MCF 10A (cell line): ENCODE measurements at regions of chr1 and their contacts with region 1.

Region 1: DNA sequence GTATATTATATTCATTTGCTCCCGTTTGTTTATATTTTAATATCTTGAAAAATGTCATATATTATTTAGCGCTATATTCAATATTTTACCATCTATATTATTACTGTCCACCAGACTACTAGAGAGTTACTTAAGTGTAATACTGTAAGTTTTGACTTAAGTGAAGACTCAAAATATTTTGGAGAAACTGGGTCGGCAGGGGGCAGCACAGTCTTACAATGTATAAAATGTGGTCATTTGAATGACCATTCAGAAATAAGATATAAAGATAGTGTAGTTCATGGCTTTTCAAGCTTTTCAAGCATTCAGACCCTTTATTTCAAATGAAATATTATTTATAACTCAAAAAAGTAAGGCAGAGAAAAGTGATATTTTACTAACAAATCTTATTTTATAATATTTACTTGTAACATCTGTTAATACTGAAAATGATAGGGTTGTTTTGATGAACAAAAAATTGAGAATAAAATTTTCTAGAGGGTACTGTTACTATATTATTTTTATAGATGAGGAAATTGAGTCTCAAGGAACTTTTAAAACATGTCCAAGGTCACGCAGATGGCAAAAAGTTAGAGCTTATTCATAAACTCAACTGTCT is 89.0 kb upstream of the SERTAD4 start:
- DNase-seq: peak; percentile 89
- H3K4me3 Mint-ChIP-seq: no peak overlapping the region
- H3K27ac Mint-ChIP-seq: no peak overlapping the region
- H3K4me1 Mint-ChIP-seq: no peaks in the 10 kb centered on the region
- H3K27me3 Mint-ChIP-seq: peaks cover 32% of the 10 kb centered on the region
- CTCF ChIP-seq: peak; percentile 91

Region 2: DNA sequence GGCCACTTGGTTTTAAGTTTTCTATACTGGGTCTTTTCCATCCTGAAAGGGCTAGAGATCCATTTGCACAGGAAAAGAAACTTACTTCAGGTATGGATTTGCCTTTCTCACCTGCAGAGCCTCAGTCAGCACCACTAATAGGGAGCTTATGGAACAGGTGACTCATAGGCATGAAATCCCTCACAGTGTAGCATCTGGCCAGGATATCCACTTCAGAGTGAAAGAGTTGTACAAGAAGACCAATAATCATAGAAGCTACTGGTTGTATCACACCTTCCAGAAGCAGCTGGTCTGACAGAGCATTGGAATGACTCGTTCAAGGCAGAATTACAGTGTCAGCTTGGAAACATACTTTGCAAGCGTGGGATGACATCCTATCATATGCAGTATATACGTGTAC is 231.8 kb before region 1 on chr1:
- CTCF ChIA-PET with region 1: no interaction called
- POLR2A ChIA-PET with region 1: no interaction called
- intact Hi-C with region 1: no loop called
- DNase-seq: peak; percentile 21
- H3K4me3 Mint-ChIP-seq: no peak overlapping the region
- H3K27ac Mint-ChIP-seq: no peak overlapping the region
- H3K4me1 Mint-ChIP-seq: peaks cover 7% of the 10 kb centered on the region
- H3K27me3 Mint-ChIP-seq: no peaks in the 10 kb centered on the region
- CTCF ChIP-seq: no peak

Region 3: GRCh38 chr1:210123924-210124589 is 19.5 kb before region 1 on chr1:
- CTCF ChIA-PET with region 1: interaction called, 13 read pairs
- POLR2A ChIA-PET with region 1: no interaction called
- intact Hi-C with region 1: no loop called
- DNase-seq: peak; percentile 80
- H3K4me3 Mint-ChIP-seq: no peak overlapping the region
- H3K27ac Mint-ChIP-seq: no peak overlapping the region
- H3K4me1 Mint-ChIP-seq: peaks cover 17% of the 10 kb centered on the region
- H3K27me3 Mint-ChIP-seq: peaks cover 18% of the 10 kb centered on the region
- CTCF ChIP-seq: no peak

Region 4: DNA sequence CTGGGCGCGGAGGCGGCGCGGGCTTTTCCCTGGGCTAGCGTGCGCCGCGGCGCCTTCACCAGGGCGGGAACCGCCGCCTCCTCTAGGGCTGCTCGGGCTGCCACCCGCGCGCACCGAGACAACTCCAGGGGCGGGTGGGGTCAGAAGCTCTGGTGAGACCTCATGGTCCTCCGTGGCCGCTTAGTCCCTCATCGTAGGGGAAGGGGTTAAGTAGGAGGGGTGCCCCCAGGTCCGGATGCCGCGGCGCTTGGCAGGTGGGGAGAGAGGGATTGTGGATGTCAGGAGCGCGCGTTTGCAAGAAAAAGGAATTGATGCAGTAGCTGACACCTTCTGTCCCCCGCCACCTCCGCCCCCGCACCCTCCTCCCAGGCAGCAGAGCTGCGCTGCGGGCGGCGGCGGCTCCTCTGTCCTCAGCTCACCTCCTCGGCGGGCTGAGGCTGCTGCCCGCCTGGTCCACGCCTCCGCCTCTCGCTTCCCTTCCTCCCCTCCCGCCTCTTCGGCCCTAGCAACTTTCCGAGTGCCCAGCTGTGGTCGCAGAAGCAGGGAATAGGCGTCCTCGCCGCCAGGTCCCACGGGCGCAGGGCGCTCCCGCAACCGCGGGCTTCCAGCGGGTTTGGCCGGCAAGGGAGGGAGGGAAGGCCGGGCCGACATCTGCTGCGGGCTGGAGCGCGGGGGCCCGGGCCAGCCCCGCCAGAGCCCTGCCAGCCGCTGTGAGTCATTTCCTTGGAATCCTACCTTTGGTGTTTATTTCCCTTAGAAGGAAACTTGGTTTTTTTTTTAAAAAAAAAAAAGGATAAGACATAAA is 89.9 kb after region 1 on chr1:
- CTCF ChIA-PET with region 1: interaction called, 5 read pairs
- POLR2A ChIA-PET with region 1: no interaction called
- intact Hi-C with region 1: loop called (anchors 10 kb)
- DNase-seq: peak; percentile 89
- H3K4me3 Mint-ChIP-seq: peak overlapping the region; percentile 69
- H3K27ac Mint-ChIP-seq: no peak overlapping the region
- H3K4me1 Mint-ChIP-seq: peaks cover 17% of the 10 kb centered on the region
- H3K27me3 Mint-ChIP-seq: no peaks in the 10 kb centered on the region
- CTCF ChIP-seq: no peak

Region 5: GRCh38 chr1:210321552-210321951 is 178.0 kb after region 1 on chr1:
- CTCF ChIA-PET with region 1: interaction called, 14 read pairs
- POLR2A ChIA-PET with region 1: no interaction called
- intact Hi-C with region 1: no loop called
- DNase-seq: peak; percentile 95
- H3K4me3 Mint-ChIP-seq: peak overlapping the region; percentile 4
- H3K27ac Mint-ChIP-seq: peak overlapping the region; percentile 93
- H3K4me1 Mint-ChIP-seq: peaks cover 19% of the 10 kb centered on the region
- H3K27me3 Mint-ChIP-seq: no peaks in the 10 kb centered on the region
- CTCF ChIP-seq: no peak

Region 6: GRCh38 chr1:210360852-210361477 is 217.4 kb after region 1 on chr1:
- CTCF ChIA-PET with region 1: interaction called, 49 read pairs
- POLR2A ChIA-PET with region 1: interaction called, 4 read pairs
- intact Hi-C with region 1: loop called (anchors 1 kb)
- DNase-seq: peak; percentile 76
- H3K4me3 Mint-ChIP-seq: no peak overlapping the region
- H3K27ac Mint-ChIP-seq: no peak overlapping the region
- H3K4me1 Mint-ChIP-seq: peaks cover 18% of the 10 kb centered on the region
- H3K27me3 Mint-ChIP-seq: no peaks in the 10 kb centered on the region
- CTCF ChIP-seq: peak; percentile 83

Region 7: DNA sequence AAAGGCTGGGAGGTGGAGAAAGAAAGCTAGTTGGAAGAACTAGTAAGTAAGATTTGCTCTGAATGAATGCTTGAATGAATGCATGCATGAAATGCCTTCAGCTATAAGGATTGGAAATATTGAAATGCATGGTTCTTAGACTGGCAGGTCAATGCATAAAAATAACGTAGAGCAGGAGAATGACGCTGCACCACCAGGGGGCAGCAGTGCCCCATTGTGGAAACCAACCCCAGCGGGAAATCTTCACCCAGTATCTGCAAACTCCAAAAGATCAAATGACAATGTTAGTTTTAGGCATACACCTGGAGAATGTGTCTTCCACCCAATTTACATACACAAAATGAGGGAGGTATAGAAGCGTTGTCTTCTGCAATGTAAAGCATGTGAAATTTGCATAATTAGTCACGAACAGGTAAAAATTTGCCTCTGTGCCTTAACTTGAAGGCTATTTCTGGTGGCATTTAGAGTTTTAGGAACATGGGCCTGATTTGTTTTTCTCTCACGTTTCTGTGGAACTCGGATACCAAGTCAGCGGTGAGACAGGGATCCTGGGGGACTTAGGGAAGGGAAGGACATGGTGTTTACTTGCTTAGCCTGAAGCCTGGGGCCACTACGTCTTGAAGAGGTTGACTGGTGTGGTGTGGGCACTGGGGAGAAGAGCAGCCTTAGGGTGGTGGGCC is 263.8 kb after region 1 on chr1:
- CTCF ChIA-PET with region 1: interaction called, 59 read pairs
- POLR2A ChIA-PET with region 1: no interaction called
- intact Hi-C with region 1: no loop called
- DNase-seq: peak; percentile 84
- H3K4me3 Mint-ChIP-seq: no peak overlapping the region
- H3K27ac Mint-ChIP-seq: no peak overlapping the region
- H3K4me1 Mint-ChIP-seq: no peaks in the 10 kb centered on the region
- H3K27me3 Mint-ChIP-seq: no peaks in the 10 kb centered on the region
- CTCF ChIP-seq: peak; percentile 100

Region 8: GRCh38 chr1:210647406-210648333 is 504.1 kb after region 1 on chr1:
- CTCF ChIA-PET with region 1: no interaction called
- POLR2A ChIA-PET with region 1: no interaction called
- intact Hi-C with region 1: no loop called
- DNase-seq: peak; percentile 21
- H3K4me3 Mint-ChIP-seq: no peak overlapping the region
- H3K27ac Mint-ChIP-seq: no peak overlapping the region
- H3K4me1 Mint-ChIP-seq: peaks cover 5% of the 10 kb centered on the region
- H3K27me3 Mint-ChIP-seq: no peaks in the 10 kb centered on the region
- CTCF ChIP-seq: no peak